GM12878 (cell line): ENCODE measurements at regions of chr6 and their contacts with region 1.

Region 1: GRCh38 chr6:88165844-88166492 is at the start of gene CNR1:
- DNase-seq: no peak
- ATAC-seq: peak; percentile 76
- H3K4me3 ChIP-seq: peak within 1 kb of the TSS; percentile 94
- H3K27ac ChIP-seq: no peak within 1 kb of the TSS; the same call in 1 of the 2 replicates
- H3K4me1 ChIP-seq: no peaks in the 10 kb centered on the region
- H3K27me3 ChIP-seq: 0 out of 4 replicates have a peak, but pooled peaks cover 0 to 6% of the 10 kb centered on the region in 2 experiments
- CTCF ChIP-seq: peak; percentile 24 to 47 (median 33); a peak in 4 of 6 replicates
- EP300 ChIP-seq: no peak
- POLR2A ChIP-seq: peak; percentile 77
- RAD21 ChIP-seq: no peak; the same call in 1 of the 2 replicates
- polyA plus RNA-seq, gene CNR1: 2.2 to 3.1 TPM

Region 2: DNA sequence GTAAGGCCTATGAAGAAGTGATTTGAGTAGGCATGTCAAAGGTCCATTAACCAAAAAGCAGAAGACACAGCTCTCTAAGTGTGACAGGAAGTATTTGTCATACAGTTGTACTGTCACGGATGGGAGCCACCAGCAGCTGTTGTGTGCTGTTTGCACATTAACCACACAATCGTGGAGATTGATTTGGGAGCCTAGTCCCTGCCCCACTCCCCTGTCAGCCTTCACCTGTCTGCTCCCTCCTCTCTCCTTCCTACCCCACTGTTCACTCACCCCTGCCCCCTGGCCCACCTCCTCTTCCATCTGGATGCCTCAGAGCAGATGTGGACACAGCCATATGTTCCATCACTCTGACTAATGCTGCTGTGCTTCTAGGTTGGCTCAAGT is 243.0 kb before region 1 on chr6:
- CTCF ChIA-PET with region 1: interaction called, 50 read pairs
- POLR2A ChIA-PET with region 1: no interaction called
- RAD21 ChIA-PET with region 1: interaction called, 13 read pairs
- SMC1A ChIA-PET with region 1: interaction called, 23 read pairs
- in situ Hi-C with region 1: no loop called
- intact Hi-C with region 1: no loop called
- DNase-seq: peak; percentile 86
- ATAC-seq: peak; percentile 75
- H3K4me3 ChIP-seq: no peak overlapping the region
- H3K27ac ChIP-seq: peak overlapping the region; percentile 94
- H3K4me1 ChIP-seq: peaks cover 71% of the 10 kb centered on the region
- H3K27me3 ChIP-seq: no peaks in the 10 kb centered on the region
- CTCF ChIP-seq: no peak
- EP300 ChIP-seq: peak; percentile 84 to 90
- POLR2A ChIP-seq: peak; percentile 34; the same call in 1 of the 2 replicates
- RAD21 ChIP-seq: no peak

Region 3: DNA sequence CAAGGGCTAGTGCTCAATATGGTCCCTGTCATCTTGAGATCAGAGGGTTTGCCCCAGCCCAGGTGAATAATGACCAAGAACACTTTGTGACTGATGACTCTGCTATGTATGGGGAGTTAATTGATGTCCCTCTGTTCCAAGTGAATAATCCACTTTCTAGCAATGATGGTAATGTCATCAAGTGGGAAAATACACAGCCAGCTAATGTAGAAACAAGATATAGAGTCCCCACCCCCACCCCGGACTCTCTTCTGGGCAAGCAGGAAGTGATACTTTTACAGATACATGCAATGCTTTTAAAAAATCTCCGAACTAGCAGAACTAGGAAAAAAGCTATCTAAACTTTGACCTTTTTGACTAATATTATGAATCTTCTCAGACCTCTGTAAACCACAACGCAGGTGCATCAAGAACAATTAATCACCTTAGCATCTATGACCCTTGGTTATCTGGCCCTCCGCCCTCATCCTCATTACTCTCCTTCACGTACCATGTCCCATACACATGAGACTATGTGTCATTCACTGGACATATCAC is 30.3 kb before region 1 on chr6:
- CTCF ChIA-PET with region 1: interaction called, 4 read pairs
- POLR2A ChIA-PET with region 1: interaction called, 4 read pairs
- RAD21 ChIA-PET with region 1: interaction called, 11 read pairs
- SMC1A ChIA-PET with region 1: interaction called, 12 read pairs
- in situ Hi-C with region 1: no loop called
- intact Hi-C with region 1: no loop called
- DNase-seq: peak; percentile 72
- ATAC-seq: peak; percentile 91
- H3K4me3 ChIP-seq: no peak overlapping the region
- H3K27ac ChIP-seq: no peak overlapping the region
- H3K4me1 ChIP-seq: peaks cover 20% of the 10 kb centered on the region
- H3K27me3 ChIP-seq: no peaks in the 10 kb centered on the region
- CTCF ChIP-seq: no peak
- EP300 ChIP-seq: peak; percentile 85 to 90
- POLR2A ChIP-seq: no peak
- RAD21 ChIP-seq: no peak

Region 4: DNA sequence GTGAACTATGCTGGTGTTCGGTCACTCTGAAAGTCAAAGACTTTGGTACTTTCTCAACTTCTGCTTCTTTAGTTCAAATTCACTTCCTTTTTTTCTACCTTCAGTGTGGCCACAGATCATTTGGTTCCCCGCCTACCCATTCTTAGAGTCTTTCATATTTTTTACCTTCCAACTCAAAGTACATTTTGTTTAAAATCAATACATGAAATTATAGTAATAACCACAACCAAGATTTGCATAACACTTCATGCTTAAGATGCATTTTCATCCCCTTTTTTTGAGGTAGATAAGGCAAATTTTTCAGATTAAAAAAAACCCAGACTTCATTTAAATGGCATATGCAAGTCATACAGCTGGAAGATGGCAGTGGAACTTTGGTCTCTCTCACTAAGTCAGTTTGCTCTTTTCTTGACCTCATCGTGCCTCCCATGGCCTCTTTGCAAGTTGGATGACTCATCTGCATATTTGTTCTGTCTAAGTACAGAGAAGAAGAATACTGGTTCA is 12.0 kb after region 1 on chr6:
- CTCF ChIA-PET with region 1: interaction called, 10 read pairs
- POLR2A ChIA-PET with region 1: interaction called, 7 read pairs
- RAD21 ChIA-PET with region 1: interaction called, 11 read pairs
- SMC1A ChIA-PET with region 1: interaction called, 9 read pairs
- in situ Hi-C with region 1: no loop called
- intact Hi-C with region 1: no loop called
- DNase-seq: peak; percentile 32
- ATAC-seq: peak; percentile 75
- H3K4me3 ChIP-seq: no peak overlapping the region
- H3K27ac ChIP-seq: no peak overlapping the region
- H3K4me1 ChIP-seq: peaks cover 16% of the 10 kb centered on the region; the same call in 1 of the 2 replicates
- H3K27me3 ChIP-seq: no peaks in the 10 kb centered on the region
- CTCF ChIP-seq: no peak
- EP300 ChIP-seq: no peak
- POLR2A ChIP-seq: no peak
- RAD21 ChIP-seq: no peak

Region 5: DNA sequence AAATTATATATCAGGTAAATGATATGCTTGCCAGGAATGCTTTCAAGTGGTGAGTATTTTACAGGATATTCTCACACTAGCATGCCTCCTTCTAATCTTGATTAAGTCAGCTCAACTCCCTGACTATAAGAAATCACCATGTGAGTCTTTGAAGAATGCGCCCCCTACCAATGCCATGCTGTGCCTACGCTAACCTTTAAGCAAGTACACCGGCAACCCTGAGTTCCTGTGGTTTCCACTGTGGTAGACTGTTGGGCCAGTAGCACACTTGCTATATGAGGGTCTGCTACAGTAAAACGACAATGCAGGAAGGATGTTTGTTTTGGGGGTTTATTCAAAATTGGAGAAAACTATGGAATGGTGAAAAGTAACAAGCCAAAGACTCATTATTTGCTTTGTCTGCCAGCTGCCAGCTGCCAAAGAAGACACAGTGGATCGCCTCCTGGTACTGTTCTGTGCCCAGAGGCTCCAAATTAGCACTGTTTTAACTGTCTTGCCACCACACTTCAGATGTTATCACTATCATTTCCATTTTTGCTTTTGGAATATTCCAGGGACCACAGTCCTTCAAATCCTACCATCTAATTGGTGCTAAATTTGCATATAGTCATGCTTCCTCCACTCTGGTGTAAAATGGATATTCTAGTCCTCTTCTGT is 464.0 kb after region 1 on chr6:
- CTCF ChIA-PET with region 1: no interaction called
- POLR2A ChIA-PET with region 1: no interaction called
- RAD21 ChIA-PET with region 1: no interaction called
- SMC1A ChIA-PET with region 1: no interaction called
- in situ Hi-C with region 1: no loop called
- intact Hi-C with region 1: loop called (anchors 10 kb)
- DNase-seq: no peak
- ATAC-seq: peak; percentile 84
- H3K4me3 ChIP-seq: no peak overlapping the region
- H3K27ac ChIP-seq: no peak overlapping the region; the same call in 1 of the 2 replicates
- H3K4me1 ChIP-seq: peaks cover 7% of the 10 kb centered on the region; the same call in 1 of the 2 replicates
- H3K27me3 ChIP-seq: no peaks in the 10 kb centered on the region
- CTCF ChIP-seq: peak; percentile 14 to 28 (median 23); a peak in 3 of 6 replicates
- EP300 ChIP-seq: no peak
- POLR2A ChIP-seq: no peak
- RAD21 ChIP-seq: peak; percentile 39; the same call in 1 of the 2 replicates